Activated naive CD4-positive, alpha-beta T cell treated with anti-CD3 and anti-CD28 coated beads for 36 hours (primary cell): ENCODE measurements at regions of chr6 and their contacts with region 1.

Region 1: DNA sequence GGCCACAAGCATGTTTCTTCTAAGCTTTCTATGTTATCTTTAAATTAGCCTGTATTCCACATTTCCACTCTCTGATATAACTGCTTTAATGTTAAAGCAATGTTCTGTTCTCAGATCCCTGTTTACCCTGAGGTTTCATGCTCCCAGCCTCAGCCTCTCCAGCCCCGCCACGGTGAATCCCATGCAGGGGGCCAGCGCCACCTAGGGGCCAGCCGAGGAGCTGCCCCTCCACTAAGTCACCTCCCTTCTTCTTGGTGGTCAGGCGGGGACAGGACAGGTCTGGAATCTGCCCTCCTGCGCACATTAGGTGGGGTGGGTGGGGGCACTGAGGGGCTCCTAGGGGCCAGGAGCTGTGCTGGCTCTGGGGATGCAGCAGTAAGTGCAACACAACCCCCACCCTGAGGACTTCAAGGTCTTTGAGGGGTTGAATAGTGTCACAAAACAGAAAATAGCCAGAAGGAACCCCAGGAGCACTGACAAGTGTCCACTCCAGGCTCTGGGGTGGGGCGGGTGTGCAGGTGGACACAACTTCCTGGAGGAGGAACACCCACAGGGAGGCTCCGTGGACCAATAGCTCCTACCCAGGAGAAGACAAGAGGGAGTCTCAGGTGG is 61.6 kb downstream of the RAB44 start:
- DNase-seq: peak; percentile 89
- H3K4me3 Mint-ChIP-seq: no peak overlapping the region
- H3K27ac Mint-ChIP-seq: no peak overlapping the region
- H3K4me1 Mint-ChIP-seq: peaks cover 39% of the 10 kb centered on the region
- H3K27me3 Mint-ChIP-seq: no peaks in the 10 kb centered on the region

Region 2: GRCh38 chr6:36131511-36132245 is 627.6 kb before region 1 on chr6:
- CTCF ChIA-PET with region 1: no interaction called
- intact Hi-C with region 1: loop called (anchors 5 kb)
- DNase-seq: peak; percentile 85
- H3K4me3 Mint-ChIP-seq: peak overlapping the region; percentile 83
- H3K27ac Mint-ChIP-seq: peak overlapping the region; percentile 93
- H3K4me1 Mint-ChIP-seq: peaks cover 41% of the 10 kb centered on the region
- H3K27me3 Mint-ChIP-seq: no peaks in the 10 kb centered on the region

Region 3: DNA sequence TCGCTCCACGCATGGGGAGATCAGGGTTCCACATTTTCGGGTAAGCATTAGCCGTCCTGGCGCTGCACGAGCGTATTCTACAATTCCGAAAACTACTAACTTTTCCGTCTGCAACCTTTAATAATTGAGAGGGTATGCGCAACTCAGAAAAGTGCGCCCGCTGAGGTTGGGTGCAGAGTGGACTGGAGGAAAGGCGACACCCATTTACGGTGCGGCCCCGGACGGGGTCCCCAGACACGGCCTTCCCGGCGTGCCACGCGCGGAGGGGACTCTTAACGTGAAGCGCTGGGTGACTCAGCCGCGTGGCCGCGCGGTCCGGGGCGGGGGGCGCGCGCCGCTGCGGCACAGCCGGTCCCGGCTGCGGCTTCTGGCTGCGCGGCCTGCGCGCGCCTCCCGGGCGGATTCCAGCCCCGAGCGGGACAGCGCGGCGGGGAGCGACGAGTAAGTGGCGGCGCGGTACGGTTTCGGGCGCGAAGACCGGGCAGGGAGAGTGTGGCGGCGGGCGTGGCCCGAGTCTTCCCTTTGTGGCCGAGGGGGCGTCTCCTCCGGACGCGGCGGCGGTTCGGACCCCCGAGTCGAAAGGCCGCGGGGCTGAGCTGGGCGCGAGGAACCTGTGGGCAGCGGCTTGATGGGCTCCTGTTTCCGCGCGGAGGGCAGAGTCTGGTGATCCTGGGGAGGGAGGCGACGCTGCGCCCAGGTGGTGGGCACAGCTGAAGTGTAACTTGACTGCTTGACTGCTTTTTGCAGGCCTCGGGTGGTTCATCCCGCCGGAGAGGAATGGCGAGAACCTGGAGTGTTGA is 316.4 kb before region 1 on chr6 and contains the starts of genes KCTD20 and PXT1:
- CTCF ChIA-PET with region 1: no interaction called
- intact Hi-C with region 1: loop called (anchors 1 kb)
- DNase-seq: peak; percentile 93
- H3K4me3 Mint-ChIP-seq: peak within 1 kb of the TSS; percentile 87
- H3K27ac Mint-ChIP-seq: peak within 1 kb of the TSS; percentile 98
- H3K4me1 Mint-ChIP-seq: peaks cover 41% of the 10 kb centered on the region
- H3K27me3 Mint-ChIP-seq: no peaks in the 10 kb centered on the region
- total RNA-seq, gene KCTD20: 30.5 to 32.8 TPM
- total RNA-seq, gene PXT1: 0.15 to 0.29 TPM

Region 4: GRCh38 chr6:36615018-36615761 is 144.1 kb before region 1 on chr6:
- CTCF ChIA-PET with region 1: interaction called, 25 read pairs
- intact Hi-C with region 1: loop called (anchors 1 kb)
- DNase-seq: peak; percentile 64
- H3K4me3 Mint-ChIP-seq: no peak overlapping the region
- H3K27ac Mint-ChIP-seq: peak overlapping the region; percentile 79
- H3K4me1 Mint-ChIP-seq: peaks cover 20% of the 10 kb centered on the region
- H3K27me3 Mint-ChIP-seq: no peaks in the 10 kb centered on the region

Region 5: DNA sequence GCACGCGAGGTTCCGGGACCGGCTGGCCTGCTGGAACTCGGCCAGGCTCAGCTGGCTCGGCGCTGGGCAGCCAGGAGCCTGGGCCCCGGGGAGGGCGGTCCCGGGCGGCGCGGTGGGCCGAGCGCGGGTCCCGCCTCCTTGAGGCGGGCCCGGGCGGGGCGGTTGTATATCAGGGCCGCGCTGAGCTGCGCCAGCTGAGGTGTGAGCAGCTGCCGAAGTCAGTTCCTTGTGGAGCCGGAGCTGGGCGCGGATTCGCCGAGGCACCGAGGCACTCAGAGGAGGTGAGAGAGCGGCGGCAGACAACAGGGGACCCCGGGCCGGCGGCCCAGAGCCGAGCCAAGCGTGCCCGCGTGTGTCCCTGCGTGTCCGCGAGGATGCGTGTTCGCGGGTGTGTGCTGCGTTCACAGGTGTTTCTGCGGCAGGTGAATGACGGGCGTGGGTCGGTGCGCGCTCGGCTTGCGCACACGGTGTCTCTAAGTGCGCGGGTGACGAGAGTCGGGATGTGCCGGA is 80.7 kb before region 1 on chr6 and contains the start of gene CDKN1A:
- CTCF ChIA-PET with region 1: interaction called, 33 read pairs
- intact Hi-C with region 1: loop called (anchors 1 kb)
- DNase-seq: peak; percentile 81
- H3K4me3 Mint-ChIP-seq: peak within 1 kb of the TSS; percentile 99
- H3K27ac Mint-ChIP-seq: peak within 1 kb of the TSS; percentile 86
- H3K4me1 Mint-ChIP-seq: peaks cover 47% of the 10 kb centered on the region
- H3K27me3 Mint-ChIP-seq: peaks cover 13% of the 10 kb centered on the region
- total RNA-seq, gene CDKN1A: 90.1 to 92.3 TPM

Region 6: GRCh38 chr6:36724514-36725390 is 34.5 kb before region 1 on chr6:
- CTCF ChIA-PET with region 1: interaction called, 26 read pairs
- intact Hi-C with region 1: loop called (anchors 1 kb)
- DNase-seq: peak; percentile 88
- H3K4me3 Mint-ChIP-seq: no peak overlapping the region
- H3K27ac Mint-ChIP-seq: no peak overlapping the region
- H3K4me1 Mint-ChIP-seq: peaks cover 13% of the 10 kb centered on the region
- H3K27me3 Mint-ChIP-seq: no peaks in the 10 kb centered on the region

Region 7: GRCh38 chr6:36780442-36781177 is 21.4 kb after region 1 on chr6:
- CTCF ChIA-PET with region 1: interaction called, 278 read pairs
- intact Hi-C with region 1: no loop called
- DNase-seq: no peak
- H3K4me3 Mint-ChIP-seq: no peak overlapping the region
- H3K27ac Mint-ChIP-seq: no peak overlapping the region
- H3K4me1 Mint-ChIP-seq: no peaks in the 10 kb centered on the region
- H3K27me3 Mint-ChIP-seq: no peaks in the 10 kb centered on the region

Region 8: GRCh38 chr6:38220069-38220723 is 1460.9 kb after region 1 on chr6:
- CTCF ChIA-PET with region 1: no interaction called
- intact Hi-C with region 1: no loop called
- DNase-seq: no peak
- H3K4me3 Mint-ChIP-seq: no peak overlapping the region
- H3K27ac Mint-ChIP-seq: no peak overlapping the region
- H3K4me1 Mint-ChIP-seq: peaks cover 4% of the 10 kb centered on the region
- H3K27me3 Mint-ChIP-seq: no peaks in the 10 kb centered on the region